ENCODE measurements at regions of chr12 and their contacts with region 1.

Region 1: GRCh38 chr12:45324391-45324790 is 108.5 kb downstream of the ANO6 start:
- DNase-seq: no peak
- ATAC-seq: no peak
- H3K4me3 ChIP-seq: no peak overlapping the region
- H3K27ac ChIP-seq: no peak overlapping the region
- H3K4me1 ChIP-seq: peaks cover 4% of the 10 kb centered on the region
- H3K27me3 ChIP-seq: no peaks in the 10 kb centered on the region
- CTCF ChIP-seq: no peak

Region 2: GRCh38 chr12:45183246-45183645 is 141.1 kb before region 1 on chr12:
- CTCF ChIA-PET with region 1: no interaction called
- POLR2A ChIA-PET with region 1: no interaction called
- in situ Hi-C with region 1: no loop called
- intact Hi-C with region 1: no loop called
- DNase-seq: no peak
- ATAC-seq: no peak
- H3K4me3 ChIP-seq: no peak overlapping the region
- H3K27ac ChIP-seq: no peak overlapping the region
- H3K4me1 ChIP-seq: no peaks in the 10 kb centered on the region
- H3K27me3 ChIP-seq: no peaks in the 10 kb centered on the region
- CTCF ChIP-seq: peak; percentile 47; the same call in 1 of the 2 replicates

Region 3: DNA sequence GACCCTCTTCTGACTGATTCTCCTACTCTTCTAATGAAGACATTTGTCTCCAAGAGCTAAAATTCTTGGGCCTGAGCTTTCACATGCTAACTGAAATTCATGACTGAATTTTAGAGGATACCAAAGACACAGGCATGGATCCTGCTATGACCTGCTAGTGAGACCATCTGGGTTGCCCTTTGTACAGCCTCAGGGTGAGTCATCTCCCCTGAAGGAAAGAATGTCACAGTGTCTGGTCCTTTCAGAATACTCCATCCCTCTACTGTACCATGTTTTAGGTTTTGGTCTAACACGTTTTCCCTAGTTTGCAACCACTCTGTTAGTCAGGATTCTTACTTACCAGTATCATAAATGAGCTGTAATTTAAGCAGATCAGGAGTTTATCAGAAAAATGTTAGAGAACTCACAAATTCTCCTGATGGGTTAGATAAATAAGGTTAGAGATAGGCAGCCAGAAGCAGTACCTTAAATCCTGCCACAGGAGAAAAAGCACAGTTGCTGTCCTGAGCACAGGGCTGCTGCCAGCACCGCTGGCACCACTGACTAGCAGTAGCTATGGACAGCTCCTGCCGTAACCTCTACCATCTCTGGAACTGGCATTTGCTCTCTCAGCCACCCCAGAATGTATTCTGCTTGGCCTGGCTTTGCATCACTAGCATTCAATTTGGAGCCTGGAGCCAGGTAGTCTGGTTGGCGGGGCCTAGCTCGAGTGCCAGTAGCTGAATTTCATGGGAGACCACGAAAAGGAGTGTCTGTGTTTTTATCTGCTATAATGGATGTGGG is 19.1 kb after region 1 on chr12:
- CTCF ChIA-PET with region 1: interaction called, 10 read pairs
- POLR2A ChIA-PET with region 1: no interaction called
- in situ Hi-C with region 1: no loop called
- intact Hi-C with region 1: no loop called
- DNase-seq: no peak
- ATAC-seq: peak; percentile 71; the same call in 1 of the 2 replicates
- H3K4me3 ChIP-seq: no peak overlapping the region
- H3K27ac ChIP-seq: no peak overlapping the region
- H3K4me1 ChIP-seq: no peaks in the 10 kb centered on the region
- H3K27me3 ChIP-seq: no peaks in the 10 kb centered on the region
- CTCF ChIP-seq: no peak